ENCODE measurements at regions of chr7 and their contacts with region 1.

Region 1: DNA sequence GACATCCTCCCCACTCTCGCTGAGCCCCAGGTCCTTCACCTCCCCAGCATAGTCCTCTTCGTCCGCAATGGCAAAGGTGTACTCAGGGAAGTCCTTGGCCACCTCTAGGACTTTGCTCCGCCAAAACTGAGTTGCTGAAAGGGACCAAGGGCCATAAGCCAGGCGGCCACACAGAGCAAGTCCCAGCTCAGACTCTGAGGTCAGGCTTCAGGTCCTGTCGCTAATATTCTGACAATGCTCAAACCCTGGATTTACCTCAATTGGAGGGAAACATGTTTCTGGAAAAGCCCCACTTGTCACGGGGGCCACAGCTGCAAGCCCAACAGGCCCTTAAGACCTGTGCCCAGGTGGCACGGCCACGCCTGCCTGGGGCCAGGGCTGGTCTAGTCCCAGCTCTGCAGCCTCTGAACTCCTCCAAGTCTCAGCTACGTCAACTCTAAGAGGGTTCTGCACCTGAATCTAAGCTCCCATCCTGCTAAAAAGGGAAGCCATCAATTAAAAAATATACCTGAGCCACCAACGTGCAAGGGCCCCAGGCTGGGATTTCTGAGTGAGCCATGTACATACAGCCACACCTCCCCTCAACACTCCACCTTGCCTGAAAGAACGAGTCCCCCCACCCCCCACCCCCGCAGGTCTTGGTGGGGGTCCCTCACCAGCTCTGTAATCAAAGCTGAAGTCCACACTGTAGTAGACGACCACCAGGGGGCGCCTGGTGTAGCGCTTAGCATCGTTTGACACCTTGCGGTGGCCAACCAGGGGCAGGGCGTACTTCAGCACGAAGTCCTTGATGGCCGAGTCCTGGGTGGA is 22.9 kb downstream of the PDIA4 start:
- DNase-seq: peak; percentile 80 to 92
- ATAC-seq: peak; percentile 84 to 99 (median 97)
- H3K4me3 ChIP-seq: no peak overlapping the region
- H3K4me3 Mint-ChIP-seq: no peak overlapping the region
- H3K27ac ChIP-seq: no peak overlapping the region
- H3K27ac Mint-ChIP-seq: peak overlapping the region in 1 of 2 donors; percentile 75
- H3K4me1 ChIP-seq: peaks cover 8% of the 10 kb centered on the region
- H3K4me1 Mint-ChIP-seq: peaks cover 4 to 6% of the 10 kb centered on the region in 2 donors
- H3K27me3 ChIP-seq: no peaks in the 10 kb centered on the region
- H3K27me3 Mint-ChIP-seq: no peaks in the 10 kb centered on the region
- CTCF ChIP-seq: peak; percentile 93

Region 2: GRCh38 chr7:149067876-149068275 is 62.4 kb after region 1 on chr7:
- intact Hi-C with region 1: loop called (anchors 1 kb)
- DNase-seq: peak in 1 of 2 donors; percentile 28
- ATAC-seq: no peak
- H3K4me3 ChIP-seq: no peak overlapping the region
- H3K4me3 Mint-ChIP-seq: peak overlapping the region; percentile 47
- H3K27ac ChIP-seq: no peak overlapping the region
- H3K27ac Mint-ChIP-seq: no peak overlapping the region
- H3K4me1 ChIP-seq: peaks cover 21% of the 10 kb centered on the region
- H3K4me1 Mint-ChIP-seq: peaks cover 8 to 9% of the 10 kb centered on the region in 2 donors
- H3K27me3 ChIP-seq: no peaks in the 10 kb centered on the region
- H3K27me3 Mint-ChIP-seq: no peaks in the 10 kb centered on the region
- CTCF ChIP-seq: no peak